Activated CD4-positive, alpha-beta memory T cell treated with anti-CD3 and anti-CD28 coated beads for 36 hours (primary cell): ENCODE measurements at regions of chr3 and their contacts with region 1.

Region 1: DNA sequence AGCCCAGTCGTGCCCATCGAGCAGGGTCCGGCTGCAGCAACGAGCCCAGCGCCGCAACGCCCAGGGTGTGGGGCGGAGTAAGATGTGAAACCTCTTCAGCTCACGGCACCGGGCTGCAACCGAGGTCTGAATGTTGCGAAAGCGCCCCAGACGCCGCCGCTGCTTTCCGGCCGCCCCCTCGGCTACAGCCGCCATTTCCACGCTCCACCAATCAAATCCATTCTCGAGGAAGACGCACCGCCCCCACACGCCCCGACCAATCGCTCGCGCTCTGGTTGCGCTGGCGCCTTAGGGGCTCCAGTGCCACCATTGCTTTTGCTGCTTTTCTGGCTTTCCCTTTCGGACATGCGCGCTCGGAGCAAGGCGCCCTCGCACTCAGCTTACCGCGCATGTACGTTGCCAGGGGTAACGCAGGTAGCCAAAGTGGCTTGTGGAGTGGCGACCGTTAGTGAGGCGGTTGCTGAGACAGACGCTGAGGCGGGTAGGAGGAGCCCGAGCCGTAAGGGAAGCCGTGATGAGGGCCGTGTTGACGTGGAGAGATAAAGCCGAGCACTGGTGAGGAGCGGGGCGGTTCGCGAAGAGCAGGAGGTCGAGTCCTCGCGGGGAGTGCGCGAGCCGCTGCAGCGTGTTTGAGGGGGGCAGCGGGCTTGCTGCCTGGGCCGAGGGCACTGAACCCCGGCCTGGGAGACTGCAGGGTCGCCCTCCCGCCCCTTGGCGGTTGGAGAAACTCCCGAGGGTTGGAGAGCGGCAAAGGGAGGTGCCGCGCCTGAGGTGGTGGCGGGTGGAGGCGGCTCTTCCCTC is at the starts of genes IFT122 and MBD4:
- DNase-seq: peak; percentile 99
- H3K4me3 Mint-ChIP-seq: peak within 1 kb of the TSS; percentile 87
- H3K27ac Mint-ChIP-seq: peak within 1 kb of the TSS; percentile 89
- H3K4me1 Mint-ChIP-seq: peaks cover 71% of the 10 kb centered on the region
- H3K27me3 Mint-ChIP-seq: no peaks in the 10 kb centered on the region
- total RNA-seq, gene IFT122: 21.5 to 25.5 TPM
- total RNA-seq, gene MBD4: 50.5 to 53.7 TPM

Region 2: GRCh38 chr3:129120254-129121004 is 319.6 kb before region 1 on chr3:
- CTCF ChIA-PET with region 1: no interaction called
- POLR2A ChIA-PET with region 1: no interaction called
- intact Hi-C with region 1: loop called (anchors 1 kb)
- DNase-seq: peak; percentile 97
- H3K4me3 Mint-ChIP-seq: peak overlapping the region; percentile 92
- H3K27ac Mint-ChIP-seq: peak overlapping the region; percentile 98
- H3K4me1 Mint-ChIP-seq: peaks cover 43% of the 10 kb centered on the region
- H3K27me3 Mint-ChIP-seq: no peaks in the 10 kb centered on the region

Region 3: DNA sequence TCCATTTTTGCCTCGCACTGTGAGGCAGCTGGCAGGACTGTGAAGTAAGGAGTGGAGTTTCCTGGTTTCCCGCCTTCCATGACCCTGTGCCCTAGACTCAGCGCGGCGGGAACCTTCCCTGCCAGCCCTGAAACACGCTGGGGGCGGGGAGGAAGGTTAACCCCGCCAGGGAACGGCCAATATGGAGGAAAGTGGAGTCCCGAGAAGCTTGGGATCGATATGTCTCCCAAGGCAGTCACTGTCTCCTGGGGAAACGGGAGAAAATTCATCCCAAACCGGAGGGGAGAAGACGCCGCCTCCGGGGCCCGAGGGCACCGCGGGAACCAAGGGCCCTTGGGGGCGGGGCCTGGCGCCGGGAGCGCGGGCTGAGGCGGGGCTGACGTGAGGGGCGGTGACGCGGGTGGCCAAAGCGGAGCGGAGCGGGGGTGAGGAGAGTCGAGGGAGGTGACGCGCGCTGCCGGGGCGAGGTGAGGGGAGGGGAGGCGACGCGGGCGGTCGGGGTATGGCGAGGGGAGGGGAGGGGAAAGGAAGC is 161.5 kb before region 1 on chr3 and contains the start of gene HMCES:
- CTCF ChIA-PET with region 1: no interaction called
- POLR2A ChIA-PET with region 1: no interaction called
- intact Hi-C with region 1: loop called (anchors 1 kb)
- DNase-seq: peak; percentile 97
- H3K4me3 Mint-ChIP-seq: peak within 1 kb of the TSS; percentile 89
- H3K27ac Mint-ChIP-seq: peak within 1 kb of the TSS; percentile 90
- H3K4me1 Mint-ChIP-seq: peaks cover 52% of the 10 kb centered on the region
- H3K27me3 Mint-ChIP-seq: no peaks in the 10 kb centered on the region
- total RNA-seq, gene HMCES: 58.4 to 61.5 TPM

Region 4: GRCh38 chr3:129352045-129352444 is 88.0 kb before region 1 on chr3:
- CTCF ChIA-PET with region 1: no interaction called
- POLR2A ChIA-PET with region 1: no interaction called
- intact Hi-C with region 1: no loop called
- DNase-seq: no peak
- H3K4me3 Mint-ChIP-seq: no peak overlapping the region
- H3K27ac Mint-ChIP-seq: no peak overlapping the region
- H3K4me1 Mint-ChIP-seq: no peaks in the 10 kb centered on the region
- H3K27me3 Mint-ChIP-seq: no peaks in the 10 kb centered on the region

Region 5: DNA sequence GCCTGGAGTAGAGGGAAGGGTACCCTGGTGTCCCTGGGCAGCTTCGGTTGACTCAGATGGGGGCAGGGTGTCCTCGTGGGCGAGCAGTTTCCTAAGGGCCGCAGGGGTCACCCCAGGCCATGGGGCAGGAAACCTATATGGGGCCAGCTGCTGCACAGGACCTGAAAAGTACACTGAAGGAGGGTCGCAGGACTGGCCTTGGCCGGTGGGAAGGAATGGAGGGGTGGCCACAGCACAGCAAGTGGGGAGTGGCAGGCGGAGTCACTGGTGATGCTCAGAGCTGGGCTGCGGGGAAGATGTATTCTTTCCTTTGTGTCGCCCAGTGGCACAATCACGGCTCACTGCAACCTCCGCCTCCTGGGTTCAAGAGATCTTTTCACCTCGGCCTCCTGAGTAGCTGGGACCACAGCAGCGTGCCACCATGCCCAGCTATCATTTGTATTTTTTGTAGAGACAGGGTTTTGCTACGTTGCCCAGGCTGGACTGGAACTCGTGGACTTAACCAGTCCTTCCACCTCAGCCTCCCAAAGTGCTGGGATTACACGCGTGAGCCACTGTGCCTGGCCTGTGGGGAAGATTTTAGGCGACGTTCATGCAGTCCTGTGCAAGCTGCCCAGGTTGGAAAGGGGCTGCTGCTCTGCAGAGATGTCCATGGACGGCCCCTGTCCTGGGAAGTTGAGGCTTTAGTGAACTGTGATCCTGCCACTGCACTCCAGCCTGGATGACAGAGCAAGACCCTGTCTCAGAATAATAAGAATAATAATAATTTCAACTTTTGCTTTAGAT is 68.8 kb before region 1 on chr3:
- CTCF ChIA-PET with region 1: no interaction called
- POLR2A ChIA-PET with region 1: no interaction called
- intact Hi-C with region 1: no loop called
- DNase-seq: no peak
- H3K4me3 Mint-ChIP-seq: no peak overlapping the region
- H3K27ac Mint-ChIP-seq: no peak overlapping the region
- H3K4me1 Mint-ChIP-seq: no peaks in the 10 kb centered on the region
- H3K27me3 Mint-ChIP-seq: no peaks in the 10 kb centered on the region

Region 6: GRCh38 chr3:129399145-129399894 is 40.7 kb before region 1 on chr3:
- CTCF ChIA-PET with region 1: interaction called, 9 read pairs
- POLR2A ChIA-PET with region 1: interaction called, 6 read pairs
- intact Hi-C with region 1: loop called (anchors 1 kb)
- DNase-seq: peak; percentile 82
- H3K4me3 Mint-ChIP-seq: peak overlapping the region; percentile 97
- H3K27ac Mint-ChIP-seq: peak overlapping the region; percentile 99
- H3K4me1 Mint-ChIP-seq: peaks cover 31% of the 10 kb centered on the region
- H3K27me3 Mint-ChIP-seq: no peaks in the 10 kb centered on the region

Region 7: DNA sequence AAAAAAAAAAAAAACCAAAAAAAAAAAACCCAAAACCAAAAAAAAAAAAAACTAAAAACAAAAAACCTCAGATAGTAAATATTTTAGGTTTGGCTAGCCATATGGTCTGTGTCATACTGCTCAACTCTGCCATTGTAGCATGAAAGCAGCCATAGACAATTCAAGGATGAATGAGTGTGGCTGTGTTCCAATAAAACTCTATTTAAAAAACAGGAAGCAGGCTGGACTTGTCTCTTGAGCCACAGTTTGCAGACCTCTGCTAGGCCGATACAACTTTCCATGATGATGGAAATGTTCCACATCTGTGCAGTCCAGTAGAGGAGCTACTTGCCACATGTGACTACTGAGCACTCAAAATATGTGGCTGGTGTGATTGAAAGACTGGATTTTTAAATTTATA is 22.7 kb before region 1 on chr3:
- CTCF ChIA-PET with region 1: no interaction called
- POLR2A ChIA-PET with region 1: no interaction called
- intact Hi-C with region 1: no loop called
- DNase-seq: no peak
- H3K4me3 Mint-ChIP-seq: no peak overlapping the region
- H3K27ac Mint-ChIP-seq: no peak overlapping the region
- H3K4me1 Mint-ChIP-seq: no peaks in the 10 kb centered on the region
- H3K27me3 Mint-ChIP-seq: no peaks in the 10 kb centered on the region

Region 8: DNA sequence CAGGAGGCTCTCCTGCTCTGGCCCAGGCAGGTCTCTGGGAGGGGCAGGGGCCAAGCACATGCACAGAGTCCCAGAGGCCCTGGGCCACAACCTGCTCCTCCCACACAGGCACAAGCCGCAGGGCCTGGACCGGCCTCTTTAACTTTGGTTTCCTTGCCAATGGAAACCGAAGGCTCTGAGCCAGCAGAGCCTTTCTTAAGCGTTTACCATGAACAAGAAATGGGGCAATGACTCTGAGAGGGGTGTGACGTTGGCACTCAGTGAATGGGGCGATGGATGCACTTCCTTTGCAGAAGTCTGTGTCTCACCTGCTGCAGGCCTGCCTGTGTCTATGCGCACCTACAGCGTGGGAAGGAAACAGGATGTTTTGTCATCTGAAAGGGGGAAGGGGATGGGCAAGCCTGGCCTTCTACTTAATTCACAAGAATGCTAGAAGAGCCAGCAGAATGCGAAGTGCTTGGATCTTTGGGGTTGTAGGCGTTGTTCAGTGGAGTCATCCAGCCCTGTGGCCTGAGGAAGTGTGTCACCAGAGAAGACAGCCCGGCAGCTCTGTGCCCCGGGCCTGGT is 41.8 kb after region 1 on chr3:
- CTCF ChIA-PET with region 1: no interaction called
- POLR2A ChIA-PET with region 1: no interaction called
- intact Hi-C with region 1: loop called (anchors 2 kb)
- DNase-seq: peak; percentile 72
- H3K4me3 Mint-ChIP-seq: no peak overlapping the region
- H3K27ac Mint-ChIP-seq: peak overlapping the region; percentile 72
- H3K4me1 Mint-ChIP-seq: peaks cover 13% of the 10 kb centered on the region
- H3K27me3 Mint-ChIP-seq: no peaks in the 10 kb centered on the region

Region 9: DNA sequence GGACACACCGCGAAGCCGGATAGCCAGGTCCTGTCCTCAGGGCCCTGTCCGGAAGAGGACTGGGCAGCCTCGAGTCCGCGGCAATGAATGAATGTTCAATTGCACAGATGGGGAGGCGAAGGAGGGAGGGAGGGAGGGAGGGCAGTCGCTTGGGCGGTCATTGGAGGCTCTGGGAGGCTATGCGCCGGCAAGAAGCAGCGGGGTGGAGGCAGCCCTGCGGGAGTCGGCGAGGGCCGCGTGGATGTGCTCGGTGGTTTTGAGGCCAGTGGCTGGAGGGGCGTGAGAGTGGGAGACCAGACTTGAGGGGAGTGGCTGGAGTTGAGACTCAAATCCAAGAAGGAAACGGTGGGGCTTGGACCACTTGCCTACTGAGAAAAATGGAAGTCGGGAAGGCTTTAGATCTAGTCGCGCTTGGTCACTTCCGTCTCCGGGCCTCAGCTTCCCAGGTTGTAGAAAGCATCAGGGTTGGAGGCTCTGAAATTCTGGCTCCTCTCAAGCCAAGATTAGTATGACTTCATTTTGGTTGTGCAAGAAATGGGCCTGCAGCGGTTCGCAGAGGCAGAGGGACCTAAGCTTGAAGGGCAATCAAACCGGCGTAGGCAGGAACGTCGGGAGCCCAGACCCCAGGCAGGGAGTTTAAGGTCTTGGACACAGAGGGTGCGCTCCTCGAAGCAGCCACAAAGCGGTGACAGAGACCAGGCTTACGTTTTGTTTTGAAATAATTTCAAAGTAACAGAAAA is 187.6 kb after region 1 on chr3:
- CTCF ChIA-PET with region 1: no interaction called
- POLR2A ChIA-PET with region 1: no interaction called
- intact Hi-C with region 1: loop called (anchors 2 kb)
- DNase-seq: peak; percentile 79
- H3K4me3 Mint-ChIP-seq: peak overlapping the region; percentile 85
- H3K27ac Mint-ChIP-seq: peak overlapping the region; percentile 63
- H3K4me1 Mint-ChIP-seq: peaks cover 12% of the 10 kb centered on the region
- H3K27me3 Mint-ChIP-seq: no peaks in the 10 kb centered on the region

Region 10: DNA sequence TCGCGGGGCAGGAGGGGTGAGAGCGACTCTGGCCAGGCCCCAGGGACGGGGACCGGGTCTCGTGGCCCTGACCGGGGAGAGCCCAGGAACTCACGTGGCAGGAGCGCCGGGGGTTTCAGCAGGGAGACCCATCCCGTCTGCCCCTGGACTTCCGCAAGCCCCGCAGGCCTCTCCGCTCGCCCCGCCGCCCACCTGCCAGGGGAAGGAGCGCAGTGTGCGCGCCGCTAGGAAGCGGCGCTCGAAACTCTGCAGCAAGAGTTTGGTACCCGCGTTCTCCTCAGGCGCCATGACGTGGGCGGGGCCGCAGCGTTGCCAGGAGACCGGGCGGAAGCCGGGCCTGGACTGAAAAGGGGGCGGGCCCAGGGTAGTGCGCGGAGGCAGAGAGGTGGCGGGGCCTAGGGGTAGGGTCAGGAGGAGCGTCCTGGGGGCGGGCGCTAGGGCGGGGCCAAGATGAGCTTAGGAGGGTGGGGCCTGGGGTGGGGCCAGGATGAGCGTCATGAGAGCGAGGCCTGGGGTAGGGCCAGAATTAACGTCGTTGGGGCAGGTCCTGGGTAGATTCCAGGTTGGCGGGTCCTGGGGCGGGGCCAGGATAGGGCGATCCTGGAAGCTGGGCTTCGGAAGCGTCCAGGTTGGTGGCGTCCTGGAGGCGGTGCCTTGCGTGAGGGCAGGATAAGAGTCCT is 671.3 kb after region 1 on chr3:
- CTCF ChIA-PET with region 1: no interaction called
- POLR2A ChIA-PET with region 1: no interaction called
- intact Hi-C with region 1: loop called (anchors 5 kb)
- DNase-seq: peak; percentile 99
- H3K4me3 Mint-ChIP-seq: peak overlapping the region; percentile 89
- H3K27ac Mint-ChIP-seq: peak overlapping the region; percentile 96
- H3K4me1 Mint-ChIP-seq: peaks cover 20% of the 10 kb centered on the region
- H3K27me3 Mint-ChIP-seq: no peaks in the 10 kb centered on the region